ENCODE measurements at regions of chr1 and their contacts with region 1.

Region 1: GRCh38 chr1:21270086-21270689 is 20.1 kb downstream of the ECE1 start:
- DNase-seq: peak; percentile 85
- ATAC-seq: peak; percentile 89
- H3K4me3 Mint-ChIP-seq: no peak overlapping the region
- H3K27ac Mint-ChIP-seq: no peak overlapping the region
- H3K4me1 Mint-ChIP-seq: peaks cover 14% of the 10 kb centered on the region
- H3K27me3 Mint-ChIP-seq: no peaks in the 10 kb centered on the region

Region 2: GRCh38 chr1:21239221-21239620 is 31.0 kb before region 1 on chr1:
- CTCF ChIA-PET with region 1: interaction called, 13 read pairs
- POLR2A ChIA-PET with region 1: no interaction called
- DNase-seq: no peak
- ATAC-seq: no peak
- H3K4me3 Mint-ChIP-seq: no peak overlapping the region
- H3K27ac Mint-ChIP-seq: no peak overlapping the region
- H3K4me1 Mint-ChIP-seq: no peaks in the 10 kb centered on the region
- H3K27me3 Mint-ChIP-seq: no peaks in the 10 kb centered on the region

Region 3: GRCh38 chr1:21294266-21294989 is 24.2 kb after region 1 on chr1:
- CTCF ChIA-PET with region 1: interaction called, 91 read pairs
- POLR2A ChIA-PET with region 1: interaction called, 11 read pairs
- DNase-seq: peak; percentile 91
- ATAC-seq: peak; percentile 78
- H3K4me3 Mint-ChIP-seq: peak overlapping the region; percentile 73
- H3K27ac Mint-ChIP-seq: peak overlapping the region; percentile 99
- H3K4me1 Mint-ChIP-seq: peaks cover 86% of the 10 kb centered on the region
- H3K27me3 Mint-ChIP-seq: no peaks in the 10 kb centered on the region

Region 4: DNA sequence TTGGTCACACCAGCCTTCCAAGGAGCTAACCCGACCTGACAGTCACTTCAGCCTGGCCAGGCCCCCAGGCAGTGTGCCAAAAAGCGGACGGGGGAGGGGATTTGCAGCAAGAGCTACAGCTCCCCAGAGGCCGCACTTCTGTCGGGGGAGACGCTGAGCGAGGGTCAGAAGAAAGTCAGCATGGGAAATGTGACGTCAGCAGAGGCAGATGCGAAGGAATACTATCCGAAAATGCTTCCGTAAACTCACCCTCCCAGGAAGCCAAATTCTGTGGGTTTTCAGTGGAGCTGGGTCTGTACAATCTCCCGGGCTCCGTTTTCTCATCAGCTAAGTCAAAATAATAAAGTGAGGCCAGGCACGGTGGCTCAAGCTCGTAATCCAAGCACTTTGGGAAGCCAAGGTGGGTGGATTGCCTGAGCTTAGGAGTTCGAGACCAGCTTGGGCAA is 48.5 kb after region 1 on chr1:
- CTCF ChIA-PET with region 1: interaction called, 41 read pairs
- POLR2A ChIA-PET with region 1: no interaction called
- DNase-seq: no peak
- ATAC-seq: no peak
- H3K4me3 Mint-ChIP-seq: no peak overlapping the region
- H3K27ac Mint-ChIP-seq: no peak overlapping the region
- H3K4me1 Mint-ChIP-seq: peaks cover 17% of the 10 kb centered on the region
- H3K27me3 Mint-ChIP-seq: no peaks in the 10 kb centered on the region

Region 5: DNA sequence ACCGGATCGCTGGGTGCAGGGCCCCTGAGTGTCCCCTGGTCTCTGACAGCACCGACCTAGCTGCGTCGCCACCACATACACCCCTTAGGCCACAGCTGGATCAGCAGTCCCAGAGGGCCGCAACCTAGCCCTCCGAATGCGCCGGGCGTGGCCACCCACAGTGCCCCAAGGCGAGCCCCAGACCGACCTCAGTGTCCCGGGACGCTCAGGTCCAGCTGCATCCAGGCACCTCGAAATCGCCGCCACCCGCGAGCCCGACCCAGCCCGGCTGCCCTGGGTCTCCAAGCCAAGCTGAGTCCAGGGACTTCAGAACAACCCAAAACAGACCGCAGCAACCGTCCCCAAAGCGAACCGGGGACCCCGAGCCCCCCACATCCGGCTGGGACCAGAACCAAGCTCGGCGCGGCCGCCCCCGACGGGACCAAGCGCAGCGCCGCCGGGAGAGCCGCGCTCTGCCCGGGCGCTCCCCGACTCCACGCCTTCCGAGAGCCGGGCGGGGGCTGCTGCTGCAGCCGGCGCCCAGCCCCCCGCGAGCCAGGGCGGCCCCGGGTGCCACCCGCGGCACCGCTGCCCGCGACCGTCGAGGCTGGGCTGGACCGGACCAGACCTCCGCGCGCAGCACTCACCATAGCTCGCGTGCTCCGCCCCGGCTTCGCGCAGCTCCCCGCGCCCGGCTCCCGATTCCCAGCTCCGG is 74.7 kb after region 1 on chr1:
- CTCF ChIA-PET with region 1: interaction called, 26 read pairs
- POLR2A ChIA-PET with region 1: no interaction called
- DNase-seq: peak; percentile 42
- ATAC-seq: peak; percentile 41
- H3K4me3 Mint-ChIP-seq: peak overlapping the region; percentile 87
- H3K27ac Mint-ChIP-seq: peak overlapping the region; percentile 91
- H3K4me1 Mint-ChIP-seq: peaks cover 42% of the 10 kb centered on the region
- H3K27me3 Mint-ChIP-seq: no peaks in the 10 kb centered on the region